Heart right ventricle (tissue), 16 donors: ENCODE measurements at regions of chr6 and their contacts with region 1.

Region 1: DNA sequence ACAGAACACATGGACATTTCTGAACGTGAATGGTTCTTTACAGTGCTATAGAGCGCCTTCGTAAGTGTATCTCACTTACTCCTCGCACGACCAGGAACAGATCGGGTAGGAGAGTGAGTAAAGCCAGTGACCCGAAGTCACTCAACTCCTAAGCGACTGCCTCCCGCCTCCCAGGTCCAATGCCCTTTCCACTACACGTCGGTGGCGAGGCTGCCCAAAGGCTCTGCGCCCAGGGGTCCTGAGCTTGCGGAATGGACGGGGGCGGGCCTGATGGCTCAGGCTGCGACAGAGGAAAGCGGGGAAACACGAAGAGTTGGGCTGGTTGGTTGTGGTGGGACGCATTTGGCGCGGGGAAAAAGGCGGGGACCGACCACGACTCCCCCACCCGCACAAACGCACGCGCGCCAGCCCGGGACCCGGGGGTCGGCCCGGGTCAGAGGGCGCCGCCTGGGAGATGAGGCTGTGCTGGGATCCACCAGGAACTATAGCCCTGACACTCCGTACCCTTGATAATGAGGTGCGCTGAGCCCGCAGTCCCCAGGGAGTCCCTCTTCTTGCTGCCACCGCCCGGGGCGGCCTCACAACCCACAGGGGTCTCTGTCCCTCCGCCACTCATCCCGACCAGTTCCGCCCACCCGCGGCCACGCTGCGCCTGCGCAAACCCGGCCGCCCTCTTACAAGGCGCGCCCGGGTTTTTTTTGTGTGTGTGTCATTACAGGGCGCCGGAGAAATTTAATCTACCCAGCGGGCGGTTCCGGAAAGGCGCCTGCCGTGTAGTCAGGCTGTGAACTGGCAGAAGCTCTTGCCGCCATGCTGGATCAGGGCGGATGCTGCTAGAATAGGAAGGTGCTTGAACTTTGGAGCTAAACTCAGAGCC is at the start of gene BLOC1S5:
- DNase-seq: peak; percentile 94 to 98
- ATAC-seq: peak; percentile 98 to 99 (median 99)
- H3K4me3 ChIP-seq: peak within 1 kb of the TSS; percentile 64 to 95 (median 85)
- H3K27ac ChIP-seq: peak within 1 kb of the TSS; percentile 52 to 94 (median 90)
- H3K4me1 ChIP-seq: peaks cover 0 to 25% (median 10%) of the 10 kb centered on the region in 9 donors
- H3K27me3 ChIP-seq: no peaks in the 10 kb centered on the region
- CTCF ChIP-seq: peak in 3 of 9 donors; percentile 14 to 28 (median 26)
- total RNA-seq, gene BLOC1S5: 6.8 to 14.1 (median 9.7) TPM

Region 2: GRCh38 chr6:7725849-7726415 is 338.1 kb before region 1 on chr6 and contains the start of gene BMP6:
- intact Hi-C with region 1: loop called in 9 of 10 experiments (anchors 1 to 10 kb)
- DNase-seq: peak; percentile 85 to 86
- ATAC-seq: peak; percentile 92 to 96 (median 95)
- H3K4me3 ChIP-seq: peak within 1 kb of the TSS; percentile 45 to 85 (median 64)
- H3K27ac ChIP-seq: peak within 1 kb of the TSS in 1 of 10 donors; percentile 11
- H3K4me1 ChIP-seq: peaks cover 3 to 43% (median 35%) of the 10 kb centered on the region in 9 donors
- H3K27me3 ChIP-seq: peaks cover 0 to 86% (median 56%) of the 10 kb centered on the region in 7 donors
- CTCF ChIP-seq: no peak
- total RNA-seq, gene BMP6: 1.3 to 4.1 (median 2.6) TPM

Region 3: DNA sequence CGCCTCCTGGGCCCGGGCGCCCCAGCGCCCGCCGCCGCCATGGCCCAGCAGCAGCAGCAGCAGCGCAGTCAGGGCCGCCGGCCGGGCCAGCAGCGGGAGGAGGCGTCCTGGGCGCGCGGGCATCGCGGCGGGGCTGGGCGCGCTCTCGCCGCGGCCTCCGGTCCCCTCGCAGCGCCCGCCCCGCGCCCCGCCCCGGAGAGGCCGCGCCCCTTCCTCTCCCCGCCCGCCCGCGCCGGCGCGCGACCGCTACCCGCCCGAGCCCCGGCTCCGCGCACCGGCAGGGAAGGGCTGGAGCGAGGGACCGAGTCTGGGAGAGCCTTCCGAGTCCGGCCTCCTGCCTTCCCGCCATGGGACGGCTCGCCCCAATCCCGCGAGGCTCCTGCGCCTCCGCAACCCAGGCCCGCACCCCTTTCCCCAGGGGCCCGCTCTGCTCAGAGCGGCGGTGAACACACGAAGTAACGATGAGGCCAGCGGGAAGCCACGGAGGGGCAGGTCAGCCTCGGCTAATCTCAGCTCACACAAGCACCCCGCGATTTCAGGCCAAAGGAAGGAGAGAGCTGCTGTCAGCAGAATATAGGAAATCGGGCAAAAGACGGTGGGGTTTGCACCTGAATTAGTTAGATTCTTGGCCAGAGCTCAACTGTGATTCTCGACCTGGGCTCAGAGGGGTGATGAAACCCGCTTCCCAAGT is 153.2 kb before region 1 on chr6 and contains the start of gene TXNDC5:
- intact Hi-C with region 1: loop called in 3 of 10 experiments (anchors 5 to 10 kb)
- DNase-seq: peak; percentile 83 to 87
- ATAC-seq: peak; percentile 86 to 95 (median 90)
- H3K4me3 ChIP-seq: peak within 1 kb of the TSS; percentile 58 to 88 (median 73)
- H3K27ac ChIP-seq: peak within 1 kb of the TSS; percentile 56 to 88 (median 86)
- H3K4me1 ChIP-seq: peaks cover 4 to 42% (median 17%) of the 10 kb centered on the region in 9 donors
- H3K27me3 ChIP-seq: no peaks in the 10 kb centered on the region
- CTCF ChIP-seq: no peak
- total RNA-seq, gene TXNDC5: 26.7 to 78.0 (median 38.3) TPM

Region 4: DNA sequence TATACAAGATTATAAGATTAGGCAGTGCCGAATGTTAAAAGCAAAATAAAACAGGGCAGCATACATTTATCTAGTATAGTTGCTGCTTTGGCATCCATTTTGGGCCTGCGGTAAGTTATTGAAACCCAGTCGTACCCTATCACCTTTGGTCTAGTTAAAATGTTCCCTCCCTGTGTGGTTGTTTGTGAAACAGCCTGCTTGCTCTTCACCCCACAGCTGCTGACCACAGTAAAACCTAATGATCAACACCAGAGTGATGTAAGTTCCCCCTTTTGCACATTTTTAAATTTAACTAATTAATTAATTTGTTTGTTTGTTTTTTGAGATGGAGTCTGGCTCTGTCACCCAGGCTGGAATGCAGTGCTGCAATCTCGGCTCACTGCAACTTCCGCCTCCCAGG is 103.2 kb before region 1 on chr6:
- intact Hi-C with region 1: no loop called
- DNase-seq: no peak
- ATAC-seq: no peak
- H3K4me3 ChIP-seq: no peak overlapping the region
- H3K27ac ChIP-seq: no peak overlapping the region
- H3K4me1 ChIP-seq: peaks cover 0 to 18% (median 0%) of the 10 kb centered on the region in 9 donors
- H3K27me3 ChIP-seq: no peaks in the 10 kb centered on the region
- CTCF ChIP-seq: no peak

Region 5: DNA sequence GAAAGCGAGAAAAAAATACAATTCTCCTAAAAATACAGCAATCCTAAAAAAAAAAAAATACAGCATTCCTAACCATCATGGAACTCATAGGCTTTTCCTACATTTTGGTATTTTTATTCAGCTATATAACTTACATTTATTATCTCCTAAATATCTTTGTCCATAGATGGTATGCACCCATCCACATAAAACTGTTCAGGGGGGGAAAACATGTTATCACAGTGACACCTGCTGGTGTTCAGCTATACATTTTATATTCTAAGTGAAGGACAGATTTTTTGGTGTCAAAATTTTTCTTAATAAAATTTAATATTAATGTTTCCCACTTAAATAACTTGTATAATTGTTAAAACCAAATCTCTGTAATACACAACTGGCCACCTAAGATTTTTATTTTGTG is 57.8 kb before region 1 on chr6:
- intact Hi-C with region 1: loop called in 2 of 10 experiments (anchors 5 to 10 kb)
- DNase-seq: no peak
- ATAC-seq: peak in 3 of 8 donors; percentile 56 to 71 (median 70)
- H3K4me3 ChIP-seq: no peak overlapping the region
- H3K27ac ChIP-seq: no peak overlapping the region
- H3K4me1 ChIP-seq: peaks cover 0 to 8% (median 0%) of the 10 kb centered on the region in 9 donors
- H3K27me3 ChIP-seq: no peaks in the 10 kb centered on the region
- CTCF ChIP-seq: peak; percentile 23 to 70 (median 60)

Region 6: DNA sequence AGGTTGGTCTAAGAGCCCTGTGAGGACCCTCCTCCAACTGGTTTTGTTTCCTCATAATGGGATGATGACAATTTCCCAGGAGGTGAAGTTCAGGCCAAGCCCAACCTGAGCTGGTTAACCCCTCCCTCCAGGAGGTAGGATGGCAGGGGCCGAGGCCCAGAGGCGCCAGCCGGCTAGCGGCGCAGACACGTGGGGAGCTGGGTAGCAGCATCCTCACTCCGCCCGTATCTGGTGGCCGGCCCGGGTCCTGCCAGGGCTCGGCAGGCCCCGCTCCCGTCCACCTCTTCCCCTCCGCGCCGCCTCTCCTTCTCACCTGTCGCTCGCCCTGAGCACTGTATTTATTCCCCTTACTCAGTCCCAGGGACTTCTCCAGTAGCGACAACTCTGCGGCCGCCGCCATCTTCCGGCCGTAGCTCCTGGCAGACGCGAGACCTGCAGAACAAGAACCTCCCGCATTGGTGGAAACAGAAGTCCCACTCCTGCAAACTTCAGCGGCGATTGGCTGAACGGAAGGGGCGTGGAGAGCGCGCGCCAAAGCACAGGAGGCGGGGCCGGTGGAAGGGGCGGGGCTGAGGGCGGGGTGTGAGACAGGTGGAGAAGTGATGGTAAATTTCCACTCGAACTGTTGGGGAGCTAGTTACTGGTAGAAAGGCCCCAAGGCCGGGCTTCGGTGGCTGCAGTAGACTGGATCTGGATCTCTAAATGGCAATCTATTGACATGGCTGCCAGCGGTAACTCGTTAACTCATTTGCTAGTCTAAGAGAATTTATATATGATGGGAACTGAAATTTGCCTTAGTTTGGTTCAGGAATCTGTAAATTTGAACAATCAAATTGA is 38.3 kb after region 1 on chr6 and contains the start of gene EEF1E1:
- intact Hi-C with region 1: loop called in 1 of 10 experiments (anchors 2 kb)
- DNase-seq: peak; percentile 94 to 96
- ATAC-seq: peak; percentile 98 to 100 (median 100)
- H3K4me3 ChIP-seq: peak within 1 kb of the TSS; percentile 64 to 98 (median 85)
- H3K27ac ChIP-seq: peak within 1 kb of the TSS in 6 of 10 donors; percentile 33 to 77 (median 58)
- H3K4me1 ChIP-seq: peaks cover 0 to 20% (median 8%) of the 10 kb centered on the region in 9 donors
- H3K27me3 ChIP-seq: peaks cover 0 to 22% (median 8%) of the 10 kb centered on the region in 7 donors
- CTCF ChIP-seq: peak in 1 of 9 donors; percentile 13
- total RNA-seq, gene EEF1E1: 10.0 to 18.4 (median 13.3) TPM